ENCODE measurements at regions of chr3 and their contacts with region 1.

Region 1: GRCh38 chr3:87780811-87781210 is 278.0 kb downstream of the CGGBP1 start:
- DNase-seq: no peak
- ATAC-seq: no peak
- H3K4me3 ChIP-seq: no peak overlapping the region
- H3K27ac ChIP-seq: no peak overlapping the region
- H3K4me1 ChIP-seq: no peaks in the 10 kb centered on the region
- H3K27me3 ChIP-seq: no peaks in the 10 kb centered on the region
- CTCF ChIP-seq: no peak

Region 2: DNA sequence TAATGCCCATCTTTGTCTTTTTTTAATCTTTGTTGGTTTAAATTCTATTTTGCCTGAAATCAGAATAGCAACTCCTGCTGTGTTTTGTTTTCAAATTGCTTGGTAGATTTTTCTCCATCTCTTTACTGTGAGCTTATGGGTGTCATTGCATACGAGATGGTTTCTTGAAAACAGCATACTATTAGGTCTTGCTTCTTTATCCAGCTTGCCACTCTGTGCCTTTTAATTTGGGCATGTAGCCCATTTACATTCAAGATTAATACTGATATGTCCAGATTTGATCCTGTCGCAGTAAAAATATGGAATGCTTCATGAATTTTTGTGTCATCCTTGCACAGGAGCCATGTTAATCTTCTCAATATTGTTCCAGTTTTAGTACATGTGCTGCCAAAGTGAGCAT is 38.6 kb before region 1 on chr3:
- intact Hi-C with region 1: no loop called
- DNase-seq: no peak
- ATAC-seq: no peak
- H3K4me3 ChIP-seq: no peak overlapping the region
- H3K27ac ChIP-seq: no peak overlapping the region
- H3K4me1 ChIP-seq: no peaks in the 10 kb centered on the region
- H3K27me3 ChIP-seq: no peaks in the 10 kb centered on the region
- CTCF ChIP-seq: no peak

Region 3: DNA sequence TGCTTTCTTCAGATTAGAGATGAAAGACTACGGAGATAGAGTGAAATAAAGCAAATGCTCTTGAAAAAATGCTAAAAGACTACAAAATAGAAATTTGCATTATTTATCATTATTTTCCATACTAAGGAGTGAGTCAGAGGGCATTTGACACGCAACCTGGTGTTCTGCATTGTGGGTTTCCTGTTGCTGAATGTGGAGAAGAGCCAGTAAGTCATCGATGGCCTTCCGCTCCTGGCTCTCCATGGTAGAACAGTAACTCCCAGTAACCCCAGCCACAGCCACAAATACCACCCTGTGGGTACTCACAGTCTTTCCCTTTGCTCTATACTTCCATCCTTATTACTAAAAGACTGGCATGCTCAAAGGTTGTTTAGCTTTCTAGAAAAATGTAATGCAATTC is 216.5 kb after region 1 on chr3:
- intact Hi-C with region 1: loop called in 1 of 2 experiments (anchors 10 kb)
- DNase-seq: no peak
- ATAC-seq: no peak
- H3K4me3 ChIP-seq: no peak overlapping the region
- H3K27ac ChIP-seq: no peak overlapping the region
- H3K4me1 ChIP-seq: no peaks in the 10 kb centered on the region
- H3K27me3 ChIP-seq: no peaks in the 10 kb centered on the region
- CTCF ChIP-seq: no peak